ENCODE measurements at regions of chr3 and their contacts with region 1.

Region 1: GRCh38 chr3:155189478-155189877 is 104.0 kb downstream of the STRIT1 start:
- DNase-seq: no peak
- ATAC-seq: no peak
- H3K4me3 ChIP-seq: no peak overlapping the region
- H3K27ac ChIP-seq: no peak overlapping the region
- H3K4me1 ChIP-seq: peaks cover 3% of the 10 kb centered on the region
- H3K27me3 ChIP-seq: no peaks in the 10 kb centered on the region
- CTCF ChIP-seq: no peak
- POLR2A ChIP-seq: no peak
- RAD21 ChIP-seq: no peak

Region 2: DNA sequence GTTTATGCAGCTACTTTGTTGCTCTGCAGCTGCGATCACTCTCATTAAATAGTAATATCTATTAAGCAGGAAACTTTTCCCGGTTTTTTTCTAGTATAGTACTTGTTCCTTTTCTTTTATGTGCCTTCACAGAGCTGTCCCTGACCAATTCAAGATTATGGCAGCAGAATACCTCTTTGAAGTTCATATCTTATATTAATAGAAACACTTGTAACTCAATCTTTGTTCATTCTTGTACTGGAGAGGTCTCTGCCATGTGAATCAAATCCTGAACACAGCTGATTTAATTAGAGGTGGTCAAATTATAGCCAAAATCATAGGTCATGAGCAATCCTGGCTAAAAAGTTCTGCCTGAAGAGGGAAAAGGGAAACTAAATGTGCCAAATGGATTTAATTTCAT is 1467.3 kb before region 1 on chr3:
- CTCF ChIA-PET with region 1: no interaction called
- POLR2A ChIA-PET with region 1: no interaction called
- dilution Hi-C with region 1: no loop called
- in situ Hi-C with region 1: no loop called
- intact Hi-C with region 1: no loop called
- DNase-seq: no peak
- ATAC-seq: no peak
- H3K4me3 ChIP-seq: no peak overlapping the region
- H3K27ac ChIP-seq: no peak overlapping the region
- H3K4me1 ChIP-seq: no peaks in the 10 kb centered on the region
- H3K27me3 ChIP-seq: no peaks in the 10 kb centered on the region
- CTCF ChIP-seq: no peak
- POLR2A ChIP-seq: no peak
- RAD21 ChIP-seq: no peak

Region 3: GRCh38 chr3:155217591-155217990 is 28.1 kb after region 1 on chr3:
- CTCF ChIA-PET with region 1: no interaction called
- POLR2A ChIA-PET with region 1: no interaction called
- dilution Hi-C with region 1: no loop called
- in situ Hi-C with region 1: no loop called
- intact Hi-C with region 1: loop called (anchors 1 kb)
- DNase-seq: peak; percentile 58
- ATAC-seq: no peak
- H3K4me3 ChIP-seq: no peak overlapping the region
- H3K27ac ChIP-seq: no peak overlapping the region
- H3K4me1 ChIP-seq: no peaks in the 10 kb centered on the region
- H3K27me3 ChIP-seq: no peaks in the 10 kb centered on the region
- CTCF ChIP-seq: no peak
- POLR2A ChIP-seq: no peak
- RAD21 ChIP-seq: no peak

Measured in IMR-90 (cell line).